ENCODE measurements at regions of chr6 and their contacts with region 1.

Region 1: GRCh38 chr6:128252341-128253176 is 267.8 kb downstream of the PTPRK start:
- DNase-seq: no peak
- H3K4me3 Mint-ChIP-seq: no peak overlapping the region
- H3K27ac Mint-ChIP-seq: peak overlapping the region; percentile 7
- H3K4me1 Mint-ChIP-seq: peaks cover 21% of the 10 kb centered on the region
- H3K27me3 Mint-ChIP-seq: peaks cover 18% of the 10 kb centered on the region

Region 2: DNA sequence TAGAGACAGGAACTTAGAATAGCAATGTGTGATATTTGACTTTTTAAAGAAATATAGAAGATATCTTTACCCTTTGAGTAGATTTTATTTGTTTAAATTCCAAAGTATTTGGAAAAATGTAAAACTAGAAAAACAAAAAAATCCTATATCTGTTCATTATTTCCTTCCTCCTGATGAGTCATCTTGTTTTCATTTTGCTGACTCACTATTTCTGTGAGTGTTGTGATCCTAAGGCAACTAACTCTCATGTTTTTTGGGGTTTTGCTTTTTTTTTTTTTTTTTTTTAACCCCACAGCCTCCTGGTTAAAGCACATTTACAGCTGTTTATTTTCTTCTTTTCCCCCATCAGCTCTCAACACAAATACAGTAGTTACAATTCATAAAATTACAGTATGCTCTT is 313.9 kb before region 1 on chr6:
- intact Hi-C with region 1: no loop called
- DNase-seq: no peak
- H3K4me3 Mint-ChIP-seq: no peak overlapping the region
- H3K27ac Mint-ChIP-seq: peak overlapping the region; percentile 31
- H3K4me1 Mint-ChIP-seq: peaks cover 38% of the 10 kb centered on the region
- H3K27me3 Mint-ChIP-seq: no peaks in the 10 kb centered on the region

Region 3: GRCh38 chr6:128275030-128275429 is 22.5 kb after region 1 on chr6:
- intact Hi-C with region 1: loop called (anchors 2 kb)
- DNase-seq: no peak
- H3K4me3 Mint-ChIP-seq: no peak overlapping the region
- H3K27ac Mint-ChIP-seq: no peak overlapping the region
- H3K4me1 Mint-ChIP-seq: peaks cover 7% of the 10 kb centered on the region
- H3K27me3 Mint-ChIP-seq: peaks cover 5% of the 10 kb centered on the region

Measured in activated T-helper 2 cell treated with anti-CD3 and anti-CD28 coated beads, Interferon-gamma antibody, Interleukin-2, Interleukin-4, amounts not matched to agents 10 μg/mL and 5 μg/mL and 100 μg/mL, durations not matched to agents 14 hours and 24 hours and 36 hours (primary cell).